ENCODE measurements at regions of chr14 and their contacts with region 1.

Region 1: DNA sequence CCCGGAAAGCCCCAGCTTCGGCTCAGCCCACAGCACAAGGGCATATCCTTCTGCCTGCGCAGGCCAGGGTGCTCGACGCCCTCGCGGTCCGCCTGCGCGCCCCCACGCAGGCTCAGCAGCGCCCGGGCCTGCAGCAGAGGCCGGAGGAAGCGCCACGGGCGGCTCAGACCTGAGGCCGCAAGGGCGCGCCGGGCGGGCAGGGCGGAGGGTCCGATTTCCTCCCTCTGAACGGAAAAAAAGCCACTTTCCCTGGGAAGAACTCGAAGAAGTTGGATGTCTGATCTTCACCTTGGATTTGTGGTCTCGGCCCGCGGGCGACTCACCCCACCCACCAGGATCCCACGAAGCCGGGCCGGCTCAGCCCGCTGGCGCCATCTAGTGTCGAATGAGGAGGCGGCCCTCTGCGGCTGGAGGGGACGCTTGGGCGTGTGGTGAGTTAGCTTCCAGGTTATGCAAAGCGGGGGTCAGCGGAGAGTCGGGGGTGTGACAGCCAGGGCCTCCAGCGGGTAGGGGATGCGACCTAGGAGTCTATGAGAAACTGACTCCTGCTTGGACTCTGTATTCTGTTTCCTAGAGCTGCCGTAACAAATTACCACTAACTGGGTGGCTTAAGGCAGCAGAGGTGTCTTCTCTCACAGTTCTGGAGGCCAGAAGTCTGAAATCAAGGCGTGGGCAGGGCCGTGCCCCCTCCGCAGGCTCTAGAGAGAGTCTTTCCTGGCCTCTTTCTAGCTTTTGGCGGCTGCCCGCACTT is 40.0 kb upstream of the SRSF5 start:
- DNase-seq: peak; percentile 86
- ATAC-seq: peak; percentile 94
- H3K4me3 Mint-ChIP-seq: peak overlapping the region; percentile 65
- H3K27ac Mint-ChIP-seq: peak overlapping the region; percentile 76
- H3K4me1 Mint-ChIP-seq: peaks cover 40% of the 10 kb centered on the region
- H3K27me3 Mint-ChIP-seq: no peaks in the 10 kb centered on the region

Region 2: GRCh38 chr14:69574263-69574953 is 152.5 kb before region 1 on chr14 and contains the start of gene CCDC177:
- CTCF ChIA-PET with region 1: interaction called, 11 read pairs
- DNase-seq: peak; percentile 79
- ATAC-seq: peak; percentile 76
- H3K4me3 Mint-ChIP-seq: peak within 1 kb of the TSS; percentile 46
- H3K27ac Mint-ChIP-seq: no peak within 1 kb of the TSS
- H3K4me1 Mint-ChIP-seq: peaks cover 13% of the 10 kb centered on the region
- H3K27me3 Mint-ChIP-seq: peaks cover 85% of the 10 kb centered on the region
- total RNA-seq, gene CCDC177: not detected

Region 3: DNA sequence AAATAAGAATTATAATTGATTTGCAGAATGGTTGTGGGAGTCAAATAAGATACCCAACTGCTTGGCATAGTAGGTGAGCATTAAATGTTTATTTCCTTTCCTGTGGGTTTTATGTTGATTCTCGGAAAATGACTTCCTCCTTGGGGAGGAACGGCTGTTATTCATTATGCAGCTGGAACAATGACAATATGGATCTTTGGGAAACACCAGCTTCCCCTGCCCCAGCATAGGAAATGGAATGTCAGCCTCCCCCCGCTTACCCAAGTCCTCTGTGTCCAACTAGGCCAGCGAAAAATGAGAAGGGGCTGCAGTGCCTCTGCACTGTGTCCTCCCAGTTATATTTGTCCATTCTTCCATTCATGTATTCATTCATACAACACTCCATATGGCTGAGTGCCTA is 140.5 kb before region 1 on chr14:
- CTCF ChIA-PET with region 1: interaction called, 64 read pairs
- DNase-seq: no peak
- ATAC-seq: no peak
- H3K4me3 Mint-ChIP-seq: no peak overlapping the region
- H3K27ac Mint-ChIP-seq: no peak overlapping the region
- H3K4me1 Mint-ChIP-seq: peaks cover 20% of the 10 kb centered on the region
- H3K27me3 Mint-ChIP-seq: no peaks in the 10 kb centered on the region

Region 4: GRCh38 chr14:69611201-69612011 is 115.5 kb before region 1 on chr14 and contains the start of gene SUSD6:
- CTCF ChIA-PET with region 1: interaction called, 36 read pairs
- DNase-seq: peak; percentile 91
- ATAC-seq: peak; percentile 71
- H3K4me3 Mint-ChIP-seq: peak within 1 kb of the TSS; percentile 96
- H3K27ac Mint-ChIP-seq: peak within 1 kb of the TSS; percentile 99
- H3K4me1 Mint-ChIP-seq: peaks cover 59% of the 10 kb centered on the region
- H3K27me3 Mint-ChIP-seq: no peaks in the 10 kb centered on the region
- total RNA-seq, gene SUSD6: 62.9 to 66.4 TPM

Region 5: DNA sequence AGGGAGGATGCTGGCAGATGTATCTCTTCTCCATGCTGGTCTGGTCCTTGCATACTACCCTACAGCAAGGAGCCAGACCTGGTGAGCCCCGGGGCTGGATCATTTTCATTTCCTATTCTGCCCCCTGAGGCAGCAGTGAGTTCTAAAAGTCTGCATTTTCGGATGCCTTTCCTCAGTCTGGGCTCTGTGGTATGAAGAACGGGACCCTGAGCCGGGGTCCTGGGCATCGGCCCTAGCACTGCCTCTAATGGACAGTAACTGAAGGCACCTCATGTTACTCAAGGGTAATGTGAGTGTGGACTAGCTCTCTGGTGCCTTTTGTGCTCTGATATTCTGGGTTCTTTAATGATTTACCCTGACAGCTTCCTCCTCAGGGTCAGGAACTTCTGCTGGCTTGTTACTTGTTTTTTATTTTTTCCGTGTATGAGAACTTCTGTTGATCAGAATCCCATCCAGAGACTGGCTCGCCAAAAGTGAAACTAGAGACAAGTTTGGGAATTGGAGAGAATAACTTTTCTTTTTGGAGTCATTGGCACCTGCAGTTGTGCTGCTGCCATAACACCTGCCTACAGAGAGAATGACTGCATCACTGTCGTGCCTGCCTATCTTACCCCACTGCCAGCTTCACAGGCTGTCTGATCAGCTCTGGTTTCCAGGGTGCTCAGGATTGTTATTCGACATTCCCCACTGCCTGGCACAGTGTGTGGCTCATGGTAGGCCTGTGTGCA is 53.2 kb before region 1 on chr14:
- CTCF ChIA-PET with region 1: interaction called, 11 read pairs
- DNase-seq: no peak
- ATAC-seq: peak; percentile 24
- H3K4me3 Mint-ChIP-seq: peak overlapping the region; percentile 55
- H3K27ac Mint-ChIP-seq: peak overlapping the region; percentile 83
- H3K4me1 Mint-ChIP-seq: peaks cover 91% of the 10 kb centered on the region
- H3K27me3 Mint-ChIP-seq: no peaks in the 10 kb centered on the region

Region 6: GRCh38 chr14:69695322-69696203 is 31.4 kb before region 1 on chr14:
- CTCF ChIA-PET with region 1: no interaction called
- DNase-seq: no peak
- ATAC-seq: no peak
- H3K4me3 Mint-ChIP-seq: no peak overlapping the region
- H3K27ac Mint-ChIP-seq: peak overlapping the region; percentile 47
- H3K4me1 Mint-ChIP-seq: peaks cover 81% of the 10 kb centered on the region
- H3K27me3 Mint-ChIP-seq: no peaks in the 10 kb centered on the region

Region 7: GRCh38 chr14:69708586-69709174 is 18.3 kb before region 1 on chr14:
- CTCF ChIA-PET with region 1: interaction called, 13 read pairs
- DNase-seq: peak; percentile 70
- ATAC-seq: peak; percentile 73
- H3K4me3 Mint-ChIP-seq: no peak overlapping the region
- H3K27ac Mint-ChIP-seq: peak overlapping the region; percentile 34
- H3K4me1 Mint-ChIP-seq: peaks cover 68% of the 10 kb centered on the region
- H3K27me3 Mint-ChIP-seq: no peaks in the 10 kb centered on the region

Region 8: DNA sequence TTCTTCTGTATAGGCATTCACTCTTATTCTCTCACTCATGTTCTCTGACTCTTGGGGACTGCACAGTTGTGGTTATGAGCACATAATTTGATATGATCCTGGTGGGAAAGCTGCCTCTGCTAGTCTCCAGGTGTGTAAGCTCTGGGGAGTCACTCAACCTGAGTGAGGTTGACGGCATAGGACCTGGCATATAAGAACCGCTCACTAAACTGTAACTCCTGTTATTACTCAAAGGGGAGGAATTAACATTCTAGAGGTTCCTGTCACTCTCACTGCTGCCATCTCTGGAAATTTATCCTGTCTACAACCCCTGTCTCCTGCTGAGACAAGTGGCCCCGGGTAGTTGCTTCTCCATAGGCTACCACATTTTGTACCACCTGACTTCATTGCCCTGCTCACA is 54.0 kb after region 1 on chr14:
- CTCF ChIA-PET with region 1: no interaction called
- DNase-seq: peak; percentile 12
- ATAC-seq: no peak
- H3K4me3 Mint-ChIP-seq: no peak overlapping the region
- H3K27ac Mint-ChIP-seq: no peak overlapping the region
- H3K4me1 Mint-ChIP-seq: peaks cover 22% of the 10 kb centered on the region
- H3K27me3 Mint-ChIP-seq: no peaks in the 10 kb centered on the region

Region 9: GRCh38 chr14:70027785-70028428 is 301.0 kb after region 1 on chr14:
- CTCF ChIA-PET with region 1: interaction called, 11 read pairs
- DNase-seq: peak; percentile 72
- ATAC-seq: peak; percentile 80
- H3K4me3 Mint-ChIP-seq: no peak overlapping the region
- H3K27ac Mint-ChIP-seq: no peak overlapping the region
- H3K4me1 Mint-ChIP-seq: no peaks in the 10 kb centered on the region
- H3K27me3 Mint-ChIP-seq: no peaks in the 10 kb centered on the region

Measured in activated CD8-positive, alpha-beta memory T cell treated with anti-CD3 and anti-CD28 coated beads, Interleukin-2, amount 10 ng/mL, durations not matched to agents 7 days and 5 days (primary cell).